H1 (cell line): ENCODE measurements at regions of chr19 and their contacts with region 1.

Region 1: GRCh38 chr19:9966448-9967143 is 30.3 kb upstream of the OLFM2 start:
- DNase-seq: peak; percentile 49 to 83
- H3K4me3 ChIP-seq: peak overlapping the region; percentile 4 to 56 (median 42); a peak in 7 of 8 replicates
- H3K27ac ChIP-seq: no peak overlapping the region
- H3K4me1 ChIP-seq: peaks cover 0 to 9% (median 0%) of the 10 kb centered on the region in 4 experiments; a peak in 2 of 7 replicates
- H3K27me3 ChIP-seq: peaks cover 0 to 10% (median 7%) of the 10 kb centered on the region in 4 experiments; a peak in 6 of 7 replicates
- CTCF ChIP-seq: peak in 2 of 3 experiments; percentile 27; a peak in 2 of 4 replicates
- EP300 ChIP-seq: no peak
- POLR2A ChIP-seq: 0 out of 3 replicates have a peak, but pooled peaks of 1 of the 2 experiments have one; percentile 29
- RAD21 ChIP-seq: peak in 1 of 2 experiments; percentile 38; a peak in 2 of 4 replicates

Region 2: DNA sequence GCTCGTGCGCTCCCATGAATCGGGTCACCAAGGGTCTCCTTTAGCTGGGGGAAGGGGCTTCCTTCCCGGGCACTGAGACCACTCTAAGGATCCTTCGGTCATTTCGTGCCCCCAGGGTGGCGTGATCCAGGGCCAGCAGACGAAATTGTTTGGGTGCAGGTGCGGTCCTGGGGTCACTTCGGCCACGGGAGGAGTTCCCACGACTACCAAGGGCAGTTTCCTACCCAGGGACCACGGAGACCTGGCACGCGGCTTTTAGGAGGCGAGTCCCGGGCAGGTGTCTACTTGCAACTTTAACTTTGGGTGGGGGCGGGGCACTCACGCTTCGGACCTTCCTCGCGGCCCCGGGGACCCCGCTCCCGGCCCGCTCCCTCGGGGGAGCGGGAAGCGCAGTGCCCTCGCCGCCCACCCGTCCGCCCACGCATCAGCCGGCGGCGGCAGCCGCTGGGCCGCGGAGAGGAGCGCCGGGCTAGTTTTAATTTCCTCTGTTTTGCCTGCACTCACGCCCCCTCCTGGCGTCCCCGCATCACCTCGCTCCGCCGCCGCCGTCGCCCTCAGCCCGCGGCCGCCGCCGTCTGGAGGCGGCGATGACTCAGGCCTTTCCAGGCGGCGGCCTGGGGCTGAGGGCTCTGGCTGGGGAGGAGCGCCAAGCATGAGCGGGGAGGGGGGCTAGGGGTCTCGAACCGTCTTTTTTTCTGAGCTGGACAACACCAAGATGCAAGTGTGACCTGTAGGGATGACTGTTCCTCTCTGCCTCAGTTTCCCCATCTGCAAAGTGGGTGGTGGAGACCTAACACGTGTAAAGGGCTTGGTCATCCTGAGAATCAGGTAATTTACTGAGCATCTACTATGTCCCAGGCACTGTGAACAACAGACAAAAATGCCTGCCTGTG is 52.0 kb before region 1 on chr19:
- CTCF ChIA-PET with region 1: no interaction called
- POLR2A ChIA-PET with region 1: no interaction called
- DNase-seq: peak in 1 of 2 experiments; percentile 90
- H3K4me3 ChIP-seq: peak overlapping the region; percentile 37 to 78 (median 42)
- H3K27ac ChIP-seq: peak overlapping the region; percentile 46; the same call in 1 of the 2 replicates
- H3K4me1 ChIP-seq: peaks cover 0 to 13% (median 5%) of the 10 kb centered on the region in 4 experiments; a peak in 6 of 7 replicates
- H3K27me3 ChIP-seq: peaks cover 0 to 9% (median 2%) of the 10 kb centered on the region in 4 experiments; a peak in 4 of 7 replicates
- CTCF ChIP-seq: peak; percentile 55 to 87 (median 82)
- EP300 ChIP-seq: peak in 1 of 2 experiments; percentile 78; a peak in 1 of 3 replicates
- POLR2A ChIP-seq: no peak
- RAD21 ChIP-seq: peak; percentile 48 to 60; a peak in 3 of 4 replicates

Region 3: GRCh38 chr19:9953802-9954542 is 12.6 kb before region 1 on chr19:
- CTCF ChIA-PET with region 1: interaction called, 44 read pairs
- POLR2A ChIA-PET with region 1: interaction called, 11 read pairs
- DNase-seq: no peak
- H3K4me3 ChIP-seq: no peak overlapping the region
- H3K27ac ChIP-seq: no peak overlapping the region
- H3K4me1 ChIP-seq: peaks cover 0 to 6% (median 3%) of the 10 kb centered on the region in 4 experiments; a peak in 5 of 7 replicates
- H3K27me3 ChIP-seq: no peaks in the 10 kb centered on the region
- CTCF ChIP-seq: no peak
- EP300 ChIP-seq: no peak
- POLR2A ChIP-seq: no peak
- RAD21 ChIP-seq: no peak

Region 4: GRCh38 chr19:9986787-9987281 is 20.2 kb after region 1 on chr19:
- CTCF ChIA-PET with region 1: interaction called, 11 read pairs
- POLR2A ChIA-PET with region 1: no interaction called
- DNase-seq: no peak
- H3K4me3 ChIP-seq: no peak overlapping the region
- H3K27ac ChIP-seq: no peak overlapping the region
- H3K4me1 ChIP-seq: peaks cover 0 to 4% (median 2%) of the 10 kb centered on the region in 4 experiments; a peak in 3 of 7 replicates
- H3K27me3 ChIP-seq: no peaks in the 10 kb centered on the region
- CTCF ChIP-seq: no peak
- EP300 ChIP-seq: no peak
- POLR2A ChIP-seq: no peak
- RAD21 ChIP-seq: no peak